Activated CD4-positive, alpha-beta T cell treated with anti-CD3 and anti-CD28 coated beads, Interleukin-2, amount 10 ng/mL, durations not matched to agents 24 days and 14 days (primary cell): ENCODE measurements at regions of chr12 and their contacts with region 1.

Region 1: GRCh38 chr12:94459728-94460615 is at the start of gene CEP83:
- DNase-seq: peak; percentile 100
- H3K4me3 Mint-ChIP-seq: peak within 1 kb of the TSS; percentile 98
- H3K27ac Mint-ChIP-seq: peak within 1 kb of the TSS; percentile 98
- H3K4me1 Mint-ChIP-seq: peaks cover 29% of the 10 kb centered on the region
- H3K27me3 Mint-ChIP-seq: peaks cover 4% of the 10 kb centered on the region
- total RNA-seq, gene CEP83: 36.9 and 38.7 TPM in 2 replicates

Region 2: GRCh38 chr12:93677195-93678064 is 782.5 kb before region 1 on chr12 and contains the start of gene CRADD:
- intact Hi-C with region 1: loop called (anchors 1 kb)
- DNase-seq: peak; percentile 96
- H3K4me3 Mint-ChIP-seq: peak within 1 kb of the TSS; percentile 96
- H3K27ac Mint-ChIP-seq: peak within 1 kb of the TSS; percentile 99
- H3K4me1 Mint-ChIP-seq: peaks cover 37% of the 10 kb centered on the region
- H3K27me3 Mint-ChIP-seq: peaks cover 4% of the 10 kb centered on the region
- total RNA-seq, gene CRADD: 8.1 and 12.6 TPM in 2 replicates

Region 3: DNA sequence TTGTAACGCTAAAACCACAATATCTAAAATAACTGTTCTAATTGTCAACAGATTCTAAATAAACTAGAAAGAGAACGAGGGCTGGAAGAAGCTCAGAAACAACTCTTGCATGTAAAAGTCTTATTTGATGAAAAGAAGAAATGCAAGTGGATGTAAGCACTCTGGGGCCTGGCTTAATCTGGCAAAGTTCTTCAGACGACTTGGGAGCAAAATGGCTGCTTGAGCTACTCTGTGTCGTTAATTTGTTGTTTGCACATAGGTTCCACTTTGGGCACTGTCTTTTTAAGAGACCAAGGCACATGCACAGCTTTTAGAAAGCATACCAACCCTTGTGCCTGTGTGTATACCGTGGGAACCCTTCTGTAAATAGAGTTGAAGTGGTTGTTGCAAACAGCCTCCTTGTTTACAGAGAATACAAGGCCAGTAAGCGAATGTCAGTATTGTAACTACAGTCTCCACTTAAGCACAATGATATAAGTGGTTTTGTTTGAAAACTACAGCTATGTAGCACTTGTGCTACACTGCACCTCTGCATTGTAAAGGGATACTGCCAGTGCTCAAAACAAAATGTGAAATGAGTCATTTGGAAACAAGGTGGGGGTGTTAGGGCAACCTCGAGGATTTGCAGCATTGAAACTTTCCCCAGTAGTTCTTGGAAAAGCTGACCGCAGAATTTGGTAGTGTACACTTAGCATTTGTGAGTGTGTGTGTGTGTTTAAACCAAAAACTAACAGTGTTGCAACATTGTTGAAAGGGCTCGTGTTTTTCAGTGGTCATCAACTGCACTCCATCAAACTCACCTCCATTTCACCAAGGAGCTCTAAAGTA is 154.6 kb before region 1 on chr12:
- intact Hi-C with region 1: loop called (anchors 1 kb)
- DNase-seq: peak; percentile 92
- H3K4me3 Mint-ChIP-seq: peak overlapping the region; percentile 60
- H3K27ac Mint-ChIP-seq: peak overlapping the region; percentile 82
- H3K4me1 Mint-ChIP-seq: peaks cover 47% of the 10 kb centered on the region
- H3K27me3 Mint-ChIP-seq: no peaks in the 10 kb centered on the region

Region 4: GRCh38 chr12:94372461-94372860 is 87.5 kb before region 1 on chr12:
- intact Hi-C with region 1: loop called (anchors 1 kb)
- DNase-seq: no peak
- H3K4me3 Mint-ChIP-seq: peak overlapping the region; percentile 35
- H3K27ac Mint-ChIP-seq: peak overlapping the region; percentile 85
- H3K4me1 Mint-ChIP-seq: peaks cover 23% of the 10 kb centered on the region
- H3K27me3 Mint-ChIP-seq: no peaks in the 10 kb centered on the region

Region 5: GRCh38 chr12:94644141-94644979 is 184.4 kb after region 1 on chr12:
- intact Hi-C with region 1: loop called (anchors 5 kb)
- DNase-seq: peak; percentile 70
- H3K4me3 Mint-ChIP-seq: peak overlapping the region; percentile 47
- H3K27ac Mint-ChIP-seq: peak overlapping the region; percentile 41
- H3K4me1 Mint-ChIP-seq: peaks cover 40% of the 10 kb centered on the region
- H3K27me3 Mint-ChIP-seq: peaks cover 64% of the 10 kb centered on the region